Gastrocnemius medialis (tissue), 4 donors: ENCODE measurements at regions of chr1 and their contacts with region 1.

Region 1: GRCh38 chr1:155172732-155173477 is at the start of gene KRTCAP2:
- DNase-seq: peak; percentile 91 to 96
- ATAC-seq: peak; percentile 93 to 95
- H3K4me3 ChIP-seq: peak within 1 kb of the TSS; percentile 82 to 99 (median 91)
- H3K27ac ChIP-seq: peak within 1 kb of the TSS; percentile 91 to 97 (median 96)
- H3K4me1 ChIP-seq: peaks cover 14 to 16% of the 10 kb centered on the region in 2 donors
- H3K27me3 ChIP-seq: peaks cover 15 to 21% (median 18%) of the 10 kb centered on the region in 3 donors
- CTCF ChIP-seq: peak; percentile 71 to 94 (median 93)
- POLR2A ChIP-seq: peak in 1 of 2 donors; percentile 53
- total RNA-seq, gene KRTCAP2: 59.6 to 102 (median 91.6) TPM

Region 2: DNA sequence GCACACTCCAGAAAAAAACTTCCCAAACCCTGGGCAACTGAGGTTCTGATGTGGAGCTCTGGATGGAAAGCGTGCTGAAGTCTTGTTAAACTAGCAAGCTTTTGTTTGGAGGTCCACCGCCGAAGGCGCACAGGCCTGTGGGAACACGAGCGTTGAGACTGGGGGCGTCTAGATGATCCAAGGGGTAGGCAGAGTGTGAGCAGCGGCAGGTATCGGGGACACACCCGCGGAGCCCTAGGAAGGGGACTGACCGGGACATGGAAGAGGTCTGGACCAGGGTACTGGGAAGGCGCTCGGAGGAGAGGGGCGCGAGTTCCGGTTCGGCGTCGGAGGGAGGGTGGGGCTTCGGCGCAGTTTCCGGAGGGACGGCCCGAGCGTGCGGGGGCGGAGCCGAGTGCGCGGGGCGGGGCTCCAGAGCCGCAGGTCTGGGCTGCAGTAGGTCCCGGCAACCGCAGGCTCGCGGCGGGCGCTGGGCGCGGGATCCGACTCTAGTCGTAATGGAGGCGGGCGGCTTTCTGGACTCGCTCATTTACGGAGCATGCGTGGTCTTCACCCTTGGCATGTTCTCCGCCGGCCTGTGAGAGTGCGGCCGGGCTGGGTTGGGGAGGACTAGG is 37.4 kb before region 1 on chr1 and contains the start of gene SLC50A1:
- in situ Hi-C with region 1: no loop called
- intact Hi-C with region 1: loop called (anchors 2 kb)
- DNase-seq: peak; percentile 87 to 93
- ATAC-seq: peak; percentile 69 to 78
- H3K4me3 ChIP-seq: peak within 1 kb of the TSS; percentile 82 to 93 (median 87)
- H3K27ac ChIP-seq: peak within 1 kb of the TSS; percentile 96 to 100 (median 98)
- H3K4me1 ChIP-seq: peaks cover 55 to 61% of the 10 kb centered on the region in 2 donors
- H3K27me3 ChIP-seq: no peaks in the 10 kb centered on the region
- CTCF ChIP-seq: peak; percentile 43 to 64 (median 59)
- POLR2A ChIP-seq: peak; percentile 90 to 92
- total RNA-seq, gene SLC50A1: 3.5 to 11.4 (median 8.2) TPM

Region 3: GRCh38 chr1:155193275-155193990 is 20.5 kb after region 1 on chr1:
- in situ Hi-C with region 1: no loop called
- intact Hi-C with region 1: loop called (anchors 1 kb)
- DNase-seq: peak; percentile 56 to 78
- ATAC-seq: peak; percentile 76 to 77
- H3K4me3 ChIP-seq: peak overlapping the region; percentile 51 to 75 (median 64)
- H3K27ac ChIP-seq: peak overlapping the region; percentile 58 to 69 (median 62)
- H3K4me1 ChIP-seq: peaks cover 22 to 32% of the 10 kb centered on the region in 2 donors
- H3K27me3 ChIP-seq: no peaks in the 10 kb centered on the region
- CTCF ChIP-seq: peak; percentile 90 to 98 (median 97)
- POLR2A ChIP-seq: no peak

Region 4: DNA sequence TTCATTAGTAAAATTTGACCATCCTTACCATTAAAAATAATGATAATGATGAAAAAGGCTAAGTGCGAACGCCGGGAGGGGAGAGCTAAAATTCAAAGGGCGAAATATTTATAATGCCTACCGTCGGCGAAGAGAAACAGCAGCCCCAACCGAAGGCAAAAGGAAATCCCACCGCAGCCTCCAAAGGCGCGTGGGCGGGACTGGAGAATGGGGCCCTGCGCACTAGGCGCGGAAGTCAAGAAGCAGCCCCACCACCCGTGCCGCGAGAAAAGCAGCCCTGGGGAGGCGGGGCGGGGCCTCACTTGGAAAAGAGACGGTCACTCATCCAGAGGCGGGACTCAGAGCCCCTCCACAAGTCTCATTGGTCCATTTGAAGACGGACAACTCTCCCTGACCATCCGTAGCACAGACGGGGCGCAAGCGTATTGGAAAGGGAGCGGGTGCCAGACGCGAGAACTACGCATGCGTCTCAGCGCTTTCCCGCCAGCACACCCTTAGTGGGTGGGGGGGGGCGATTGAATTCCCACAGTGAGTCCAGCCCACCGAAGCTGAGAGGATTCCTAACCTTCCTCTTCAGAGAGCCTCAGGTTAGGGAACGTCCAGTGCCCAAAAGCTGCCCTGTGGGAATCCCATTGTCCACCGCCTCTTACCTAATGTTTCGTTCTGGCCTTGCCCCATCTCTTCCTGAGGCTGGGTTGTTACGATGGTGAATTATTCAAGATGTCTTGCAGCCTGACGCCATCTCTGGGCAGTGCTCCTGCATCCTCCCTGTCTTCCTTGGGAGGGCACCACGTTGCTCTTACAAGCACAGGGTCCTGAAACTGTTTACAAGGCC is 54.6 kb after region 1 on chr1:
- in situ Hi-C with region 1: no loop called
- intact Hi-C with region 1: loop called (anchors 5 kb)
- DNase-seq: peak; percentile 97 to 99
- ATAC-seq: peak; percentile 99 to 100
- H3K4me3 ChIP-seq: peak overlapping the region; percentile 55 to 92 (median 70)
- H3K27ac ChIP-seq: peak overlapping the region; percentile 77 to 83 (median 78)
- H3K4me1 ChIP-seq: peaks cover 8 to 15% of the 10 kb centered on the region in 2 donors
- H3K27me3 ChIP-seq: no peaks in the 10 kb centered on the region
- CTCF ChIP-seq: peak in 1 of 5 experiments; percentile 3
- POLR2A ChIP-seq: peak; percentile 53 to 74